PC-9 (cell line): ENCODE measurements at regions of chrX and their contacts with region 1.

Region 1: DNA sequence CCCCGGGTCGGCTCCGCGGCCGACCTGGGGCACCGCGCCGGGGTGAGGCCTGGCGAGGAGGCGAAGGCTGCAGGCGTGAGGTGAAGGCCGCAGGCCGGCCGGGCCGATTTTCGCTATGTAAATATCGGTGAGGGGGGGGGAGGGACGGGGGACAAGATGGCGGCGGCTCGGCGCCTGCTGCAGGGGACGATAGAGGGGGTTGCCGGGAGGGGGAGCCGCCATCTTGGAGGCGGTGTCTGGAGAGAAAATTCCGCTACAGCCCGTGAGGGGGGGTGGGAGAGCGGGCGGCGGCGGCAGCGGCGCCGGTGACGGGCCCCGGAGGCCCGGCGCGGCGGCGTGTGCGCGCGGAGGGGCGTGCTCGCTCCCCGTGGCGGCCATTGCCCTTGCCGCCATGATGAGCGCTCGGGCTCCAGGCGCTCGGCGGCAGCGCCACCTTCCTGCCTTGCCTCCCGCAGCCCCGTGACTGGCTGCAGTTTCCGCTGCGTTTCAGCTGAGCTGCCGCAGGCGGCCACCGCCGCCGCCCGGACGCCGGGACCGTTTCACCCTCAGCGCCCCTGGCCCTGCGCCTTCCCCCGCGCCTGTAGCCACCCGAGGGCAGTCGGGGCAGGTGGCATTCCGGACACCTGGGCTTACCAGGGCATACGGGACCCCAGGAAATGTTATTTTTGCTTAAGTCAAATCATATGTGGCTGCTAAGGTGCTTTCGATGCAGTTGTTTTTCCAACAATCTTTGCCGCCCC is 692 bp downstream of the ZFX start:
- DNase-seq: peak; percentile 61 to 77
- H3K4me3 ChIP-seq: peak overlapping the region; percentile 90
- H3K27ac ChIP-seq: peak overlapping the region; percentile 86
- H3K4me1 ChIP-seq: peaks cover 72% of the 10 kb centered on the region
- H3K27me3 ChIP-seq: no peaks in the 10 kb centered on the region
- CTCF ChIP-seq: peak; percentile 24; the same call in 1 of the 2 replicates

Region 2: GRCh38 chrX:23667239-23668177 is 482.7 kb before region 1 on chrX and contains the start of gene PRDX4:
- CTCF ChIA-PET with region 1: no interaction called
- POLR2A ChIA-PET with region 1: no interaction called
- intact Hi-C with region 1: loop called (anchors 5 kb)
- DNase-seq: peak; percentile 60 to 87
- H3K4me3 ChIP-seq: peak within 1 kb of the TSS; percentile 61
- H3K27ac ChIP-seq: peak within 1 kb of the TSS; percentile 81
- H3K4me1 ChIP-seq: peaks cover 12% of the 10 kb centered on the region; the same call in 1 of the 2 replicates
- H3K27me3 ChIP-seq: no peaks in the 10 kb centered on the region
- CTCF ChIP-seq: no peak
- total RNA-seq, gene PRDX4: 60.6 and 76.4 TPM in 2 replicates

Region 3: DNA sequence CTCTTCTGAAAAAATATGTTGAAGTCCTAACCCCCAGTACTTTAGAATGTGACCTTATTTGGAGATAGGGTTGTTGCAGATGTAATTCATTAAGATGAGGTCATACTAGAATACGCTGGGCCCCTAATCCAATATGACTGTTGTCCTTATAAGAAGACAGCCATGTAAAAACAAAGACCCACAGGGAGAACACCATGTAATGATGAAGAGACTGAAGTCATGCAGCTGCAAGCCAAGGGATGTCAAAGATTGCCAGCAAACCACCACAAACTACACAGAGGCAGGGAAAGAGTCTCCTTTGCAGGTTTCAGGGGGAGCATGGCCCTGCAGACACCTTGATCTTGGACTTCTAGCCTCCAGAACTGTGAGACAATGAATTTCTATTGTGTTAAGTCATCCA is 205.0 kb before region 1 on chrX:
- CTCF ChIA-PET with region 1: no interaction called
- POLR2A ChIA-PET with region 1: no interaction called
- intact Hi-C with region 1: no loop called
- DNase-seq: no peak
- H3K4me3 ChIP-seq: no peak overlapping the region
- H3K27ac ChIP-seq: no peak overlapping the region
- H3K4me1 ChIP-seq: no peaks in the 10 kb centered on the region
- H3K27me3 ChIP-seq: no peaks in the 10 kb centered on the region
- CTCF ChIP-seq: no peak

Region 4: GRCh38 chrX:24124244-24124799 is 25.9 kb before region 1 on chrX:
- CTCF ChIA-PET with region 1: no interaction called
- POLR2A ChIA-PET with region 1: no interaction called
- intact Hi-C with region 1: no loop called
- DNase-seq: no peak
- H3K4me3 ChIP-seq: no peak overlapping the region
- H3K27ac ChIP-seq: no peak overlapping the region
- H3K4me1 ChIP-seq: no peaks in the 10 kb centered on the region
- H3K27me3 ChIP-seq: no peaks in the 10 kb centered on the region
- CTCF ChIP-seq: no peak